ENCODE measurements at regions of chr1 and their contacts with region 1.

Region 1: GRCh38 chr1:115062542-115063011 is 26.7 kb downstream of the TSPAN2 start:
- DNase-seq: peak; percentile 98
- ATAC-seq: peak; percentile 96
- H3K4me3 Mint-ChIP-seq: peak overlapping the region; percentile 30
- H3K27ac Mint-ChIP-seq: peak overlapping the region; percentile 94
- H3K4me1 Mint-ChIP-seq: peaks cover 42% of the 10 kb centered on the region
- H3K27me3 Mint-ChIP-seq: no peaks in the 10 kb centered on the region
- CTCF ChIP-seq: no peak

Region 2: GRCh38 chr1:115074839-115075534 is 12.4 kb after region 1 on chr1:
- CTCF ChIA-PET with region 1: no interaction called
- POLR2A ChIA-PET with region 1: no interaction called
- intact Hi-C with region 1: no loop called
- DNase-seq: no peak
- ATAC-seq: no peak
- H3K4me3 Mint-ChIP-seq: no peak overlapping the region
- H3K27ac Mint-ChIP-seq: no peak overlapping the region
- H3K4me1 Mint-ChIP-seq: peaks cover 48% of the 10 kb centered on the region
- H3K27me3 Mint-ChIP-seq: peaks cover 2% of the 10 kb centered on the region
- CTCF ChIP-seq: no peak

Region 3: DNA sequence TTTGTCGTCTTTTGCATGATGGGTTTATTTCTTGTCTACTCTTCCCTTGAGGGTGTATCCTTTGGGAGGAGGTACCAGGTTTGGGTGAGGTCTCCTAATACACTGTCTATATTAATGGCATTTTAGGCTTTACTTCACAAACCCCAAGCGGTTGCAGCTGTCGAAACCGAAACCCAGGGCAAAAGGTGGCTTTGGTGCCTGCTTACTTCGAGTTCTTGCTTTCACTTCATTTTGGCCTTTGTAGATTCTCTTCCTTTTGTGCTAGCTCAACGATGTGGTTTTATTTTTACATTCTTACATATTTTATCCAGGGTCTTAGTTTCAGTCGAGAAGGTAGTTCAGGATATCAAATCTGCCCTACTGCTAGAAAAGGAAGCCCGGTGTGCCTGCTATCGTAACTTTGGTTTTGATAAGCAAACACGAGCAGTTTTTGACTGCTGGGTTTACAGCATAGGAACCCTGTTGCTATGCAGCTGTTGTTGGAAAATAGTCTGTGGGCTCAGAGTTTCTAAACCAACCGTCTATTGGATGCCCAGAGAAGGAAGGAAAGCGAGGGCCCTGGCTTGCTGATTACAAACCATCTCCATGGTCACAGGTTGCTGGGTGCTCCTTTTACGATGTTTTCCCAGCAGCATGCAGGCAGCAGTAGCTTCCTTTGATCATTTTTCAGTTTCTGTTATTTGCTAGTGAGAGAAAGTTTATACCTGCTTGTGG is 36.6 kb after region 1 on chr1:
- CTCF ChIA-PET with region 1: no interaction called
- POLR2A ChIA-PET with region 1: interaction called, 8 read pairs
- intact Hi-C with region 1: loop called (anchors 5 kb)
- DNase-seq: peak; percentile 85
- ATAC-seq: peak; percentile 86
- H3K4me3 Mint-ChIP-seq: peak overlapping the region; percentile 77
- H3K27ac Mint-ChIP-seq: peak overlapping the region; percentile 88
- H3K4me1 Mint-ChIP-seq: peaks cover 33% of the 10 kb centered on the region
- H3K27me3 Mint-ChIP-seq: no peaks in the 10 kb centered on the region
- CTCF ChIP-seq: no peak

Region 4: DNA sequence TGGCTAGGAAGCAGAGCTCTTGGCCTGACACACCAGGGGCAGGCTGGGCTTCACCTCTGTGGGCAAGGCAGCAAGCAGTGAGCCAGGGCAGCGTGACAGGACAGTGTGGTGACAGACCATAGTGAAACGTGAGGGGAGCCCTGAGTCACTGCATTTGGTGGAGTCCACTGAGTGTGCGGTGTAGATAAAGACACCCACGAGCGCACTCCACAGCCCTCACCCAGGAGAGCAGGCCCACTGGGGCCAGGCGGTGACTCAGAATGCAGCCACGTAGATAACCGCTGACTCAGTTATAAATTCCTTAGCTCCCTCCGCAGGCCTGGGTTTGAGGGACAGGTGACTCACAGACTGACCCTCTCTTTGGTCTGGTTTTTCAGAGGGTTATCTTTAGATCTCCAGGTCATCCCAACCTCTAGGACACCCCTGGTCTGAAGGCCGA is 116.8 kb after region 1 on chr1:
- CTCF ChIA-PET with region 1: no interaction called
- POLR2A ChIA-PET with region 1: no interaction called
- intact Hi-C with region 1: no loop called
- DNase-seq: no peak
- ATAC-seq: no peak
- H3K4me3 Mint-ChIP-seq: no peak overlapping the region
- H3K27ac Mint-ChIP-seq: no peak overlapping the region
- H3K4me1 Mint-ChIP-seq: peaks cover 3% of the 10 kb centered on the region
- H3K27me3 Mint-ChIP-seq: no peaks in the 10 kb centered on the region
- CTCF ChIP-seq: no peak